Posterior vena cava (tissue), 2 donors: ENCODE measurements at regions of chr2 and their contacts with region 1.

Region 1: DNA sequence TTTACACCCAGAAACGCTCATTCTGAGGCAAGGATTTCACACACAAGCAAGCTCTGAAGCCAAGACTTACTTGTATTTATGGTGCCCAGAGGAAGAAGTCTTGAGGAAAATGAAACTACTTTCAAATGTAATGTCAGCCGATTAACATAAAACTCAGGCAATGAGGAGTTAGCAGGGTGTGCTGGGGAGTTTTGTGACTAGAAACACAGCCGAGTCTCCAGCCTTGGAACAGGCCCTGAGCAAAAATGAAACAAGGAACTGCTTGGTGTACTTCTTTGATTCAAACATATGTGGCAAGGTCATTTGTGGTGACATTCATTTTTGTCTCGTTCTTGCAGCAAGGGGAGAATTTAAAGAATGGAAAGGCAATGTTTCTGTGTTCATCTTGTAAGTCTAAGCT is 4.5 kb downstream of the DYTN start:
- DNase-seq: no peak

Region 2: GRCh38 chr2:207352978-207353671 is 639.4 kb after region 1 on chr2:
- intact Hi-C with region 1: no loop called
- DNase-seq: no peak

Region 3: GRCh38 chr2:208399202-208399601 is 1685.5 kb after region 1 on chr2:
- intact Hi-C with region 1: loop called in 1 of 2 experiments (anchors 5 kb)
- DNase-seq: no peak